B cell (primary cell): ENCODE measurements at regions of chr13 and their contacts with region 1.

Region 1: GRCh38 chr13:36981156-36981743 is 17.9 kb downstream of the ALG5 start:
- DNase-seq: peak; percentile 46
- ATAC-seq: no peak
- H3K4me3 ChIP-seq: no peak overlapping the region
- H3K4me3 Mint-ChIP-seq: no peak overlapping the region
- H3K27ac ChIP-seq: no peak overlapping the region
- H3K27ac Mint-ChIP-seq: no peak overlapping the region
- H3K4me1 ChIP-seq: no peaks in the 10 kb centered on the region
- H3K4me1 Mint-ChIP-seq: peaks cover 2% of the 10 kb centered on the region
- H3K27me3 ChIP-seq: no peaks in the 10 kb centered on the region
- H3K27me3 Mint-ChIP-seq: no peaks in the 10 kb centered on the region
- CTCF ChIP-seq: peak; percentile 73

Region 2: GRCh38 chr13:36282818-36283445 is 698.3 kb before region 1 on chr13:
- CTCF ChIA-PET with region 1: interaction called, 4 read pairs
- POLR2A ChIA-PET with region 1: no interaction called
- intact Hi-C with region 1: loop called (anchors 2 kb)
- DNase-seq: peak; percentile 33
- ATAC-seq: no peak
- H3K4me3 ChIP-seq: no peak overlapping the region
- H3K4me3 Mint-ChIP-seq: no peak overlapping the region
- H3K27ac ChIP-seq: no peak overlapping the region
- H3K27ac Mint-ChIP-seq: no peak overlapping the region
- H3K4me1 ChIP-seq: no peaks in the 10 kb centered on the region
- H3K4me1 Mint-ChIP-seq: no peaks in the 10 kb centered on the region
- H3K27me3 ChIP-seq: no peaks in the 10 kb centered on the region
- H3K27me3 Mint-ChIP-seq: no peaks in the 10 kb centered on the region
- CTCF ChIP-seq: peak; percentile 81

Region 3: GRCh38 chr13:36346222-36347083 is 634.8 kb before region 1 on chr13 and contains the start of gene SPART:
- CTCF ChIA-PET with region 1: interaction called, 5 read pairs
- POLR2A ChIA-PET with region 1: no interaction called
- intact Hi-C with region 1: loop called (anchors 5 kb)
- DNase-seq: peak; percentile 92
- ATAC-seq: peak; percentile 85
- H3K4me3 ChIP-seq: peak within 1 kb of the TSS; percentile 64 to 98 (median 85)
- H3K4me3 Mint-ChIP-seq: peak within 1 kb of the TSS; percentile 95
- H3K27ac ChIP-seq: peak within 1 kb of the TSS; percentile 93 to 96
- H3K27ac Mint-ChIP-seq: peak within 1 kb of the TSS; percentile 96
- H3K4me1 ChIP-seq: peaks cover 10 to 16% of the 10 kb centered on the region in 2 donors
- H3K4me1 Mint-ChIP-seq: peaks cover 24% of the 10 kb centered on the region
- H3K27me3 ChIP-seq: no peaks in the 10 kb centered on the region
- H3K27me3 Mint-ChIP-seq: peaks cover 14% of the 10 kb centered on the region
- CTCF ChIP-seq: peak; percentile 88
- total RNA-seq, gene SPART: 18.6 and 20.8 TPM in 2 replicates

Region 4: GRCh38 chr13:36420437-36420891 is 560.8 kb before region 1 on chr13:
- CTCF ChIA-PET with region 1: interaction called, 47 read pairs
- POLR2A ChIA-PET with region 1: no interaction called
- intact Hi-C with region 1: no loop called
- DNase-seq: peak; percentile 76
- ATAC-seq: peak; percentile 80
- H3K4me3 ChIP-seq: no peak overlapping the region
- H3K4me3 Mint-ChIP-seq: no peak overlapping the region
- H3K27ac ChIP-seq: no peak overlapping the region
- H3K27ac Mint-ChIP-seq: no peak overlapping the region
- H3K4me1 ChIP-seq: peaks cover 0 to 9% of the 10 kb centered on the region in 2 donors
- H3K4me1 Mint-ChIP-seq: peaks cover 6% of the 10 kb centered on the region
- H3K27me3 ChIP-seq: peaks cover 0 to 7% (median 2%) of the 10 kb centered on the region in 4 experiments
- H3K27me3 Mint-ChIP-seq: peaks cover 36% of the 10 kb centered on the region
- CTCF ChIP-seq: peak; percentile 97

Region 5: GRCh38 chr13:36818804-36819738 is 162.2 kb before region 1 on chr13 and contains the start of gene RFXAP:
- CTCF ChIA-PET with region 1: interaction called, 5 read pairs
- POLR2A ChIA-PET with region 1: interaction called, 7 read pairs
- intact Hi-C with region 1: loop called (anchors 2 kb)
- DNase-seq: peak; percentile 95
- ATAC-seq: peak; percentile 93
- H3K4me3 ChIP-seq: peak within 1 kb of the TSS; percentile 54 to 96 (median 69)
- H3K4me3 Mint-ChIP-seq: peak within 1 kb of the TSS; percentile 97
- H3K27ac ChIP-seq: peak within 1 kb of the TSS; percentile 45 to 79
- H3K27ac Mint-ChIP-seq: peak within 1 kb of the TSS; percentile 91
- H3K4me1 ChIP-seq: peaks cover 19 to 22% of the 10 kb centered on the region in 2 donors
- H3K4me1 Mint-ChIP-seq: peaks cover 47% of the 10 kb centered on the region
- H3K27me3 ChIP-seq: peaks cover 0 to 5% (median 2%) of the 10 kb centered on the region in 4 experiments
- H3K27me3 Mint-ChIP-seq: peaks cover 11% of the 10 kb centered on the region
- CTCF ChIP-seq: peak; percentile 21
- total RNA-seq, gene RFXAP: 9.6 and 13.5 TPM in 2 replicates

Region 6: DNA sequence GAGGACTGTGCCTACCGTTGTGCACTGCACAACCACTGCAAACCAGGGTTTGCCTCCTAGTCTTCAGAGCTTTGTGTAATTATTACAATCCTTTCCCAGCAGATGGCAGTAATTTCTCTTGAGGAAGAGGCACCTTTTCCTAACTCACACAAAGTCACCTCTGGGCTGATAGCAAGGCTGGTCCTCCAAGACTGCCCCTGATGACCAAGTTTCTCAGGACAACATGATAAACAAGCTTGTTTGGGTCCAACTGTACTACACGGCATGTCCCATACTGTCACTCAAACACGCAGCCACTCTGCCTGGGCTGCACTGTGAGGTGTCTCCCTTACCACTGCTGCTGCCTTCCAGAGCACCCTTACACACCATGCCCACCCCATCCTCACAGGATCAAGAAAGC is 123.0 kb before region 1 on chr13:
- CTCF ChIA-PET with region 1: interaction called, 15 read pairs
- POLR2A ChIA-PET with region 1: no interaction called
- intact Hi-C with region 1: loop called (anchors 2 kb)
- DNase-seq: peak; percentile 20
- ATAC-seq: no peak
- H3K4me3 ChIP-seq: no peak overlapping the region
- H3K4me3 Mint-ChIP-seq: no peak overlapping the region
- H3K27ac ChIP-seq: no peak overlapping the region
- H3K27ac Mint-ChIP-seq: no peak overlapping the region
- H3K4me1 ChIP-seq: no peaks in the 10 kb centered on the region
- H3K4me1 Mint-ChIP-seq: no peaks in the 10 kb centered on the region
- H3K27me3 ChIP-seq: peaks cover 0 to 5% (median under 1%) of the 10 kb centered on the region in 4 experiments
- H3K27me3 Mint-ChIP-seq: peaks cover 23% of the 10 kb centered on the region
- CTCF ChIP-seq: peak; percentile 44

Region 7: GRCh38 chr13:36915106-36915505 is 66.1 kb before region 1 on chr13:
- CTCF ChIA-PET with region 1: no interaction called
- POLR2A ChIA-PET with region 1: no interaction called
- intact Hi-C with region 1: no loop called
- DNase-seq: no peak
- ATAC-seq: no peak
- H3K4me3 ChIP-seq: no peak overlapping the region
- H3K4me3 Mint-ChIP-seq: no peak overlapping the region
- H3K27ac ChIP-seq: no peak overlapping the region
- H3K27ac Mint-ChIP-seq: no peak overlapping the region
- H3K4me1 ChIP-seq: peaks cover 5 to 6% of the 10 kb centered on the region in 2 donors
- H3K4me1 Mint-ChIP-seq: peaks cover 10% of the 10 kb centered on the region
- H3K27me3 ChIP-seq: peaks cover 0 to 21% (median 12%) of the 10 kb centered on the region in 4 experiments
- H3K27me3 Mint-ChIP-seq: peaks cover 45% of the 10 kb centered on the region
- CTCF ChIP-seq: no peak

Region 8: GRCh38 chr13:36992340-36992739 is 11.1 kb after region 1 on chr13:
- CTCF ChIA-PET with region 1: interaction called, 12 read pairs
- POLR2A ChIA-PET with region 1: no interaction called
- intact Hi-C with region 1: no loop called
- DNase-seq: no peak
- ATAC-seq: no peak
- H3K4me3 ChIP-seq: no peak overlapping the region
- H3K4me3 Mint-ChIP-seq: no peak overlapping the region
- H3K27ac ChIP-seq: no peak overlapping the region
- H3K27ac Mint-ChIP-seq: no peak overlapping the region
- H3K4me1 ChIP-seq: no peaks in the 10 kb centered on the region
- H3K4me1 Mint-ChIP-seq: peaks cover 8% of the 10 kb centered on the region
- H3K27me3 ChIP-seq: no peaks in the 10 kb centered on the region
- H3K27me3 Mint-ChIP-seq: no peaks in the 10 kb centered on the region
- CTCF ChIP-seq: no peak

Region 9: DNA sequence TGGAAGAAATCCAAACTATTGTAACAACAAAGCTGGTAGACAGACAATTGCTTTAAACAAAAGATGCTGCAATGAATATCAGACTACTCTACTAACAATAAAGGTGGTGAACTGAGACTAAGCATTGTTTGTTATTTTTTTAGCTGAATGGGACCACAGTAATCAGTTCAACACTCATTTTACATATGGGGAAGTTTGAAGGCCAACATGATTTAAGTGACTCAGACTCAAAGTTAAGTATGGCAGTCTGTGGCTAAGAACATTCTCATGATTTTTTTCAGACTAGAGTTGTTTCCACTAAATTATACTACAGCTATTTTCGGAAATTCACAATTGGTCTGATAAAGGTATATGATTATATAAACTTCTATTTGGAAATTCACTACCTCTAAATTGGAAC is 29.8 kb after region 1 on chr13:
- CTCF ChIA-PET with region 1: no interaction called
- POLR2A ChIA-PET with region 1: no interaction called
- intact Hi-C with region 1: no loop called
- DNase-seq: no peak
- ATAC-seq: no peak
- H3K4me3 ChIP-seq: no peak overlapping the region
- H3K4me3 Mint-ChIP-seq: no peak overlapping the region
- H3K27ac ChIP-seq: no peak overlapping the region
- H3K27ac Mint-ChIP-seq: no peak overlapping the region
- H3K4me1 ChIP-seq: no peaks in the 10 kb centered on the region
- H3K4me1 Mint-ChIP-seq: no peaks in the 10 kb centered on the region
- H3K27me3 ChIP-seq: no peaks in the 10 kb centered on the region
- H3K27me3 Mint-ChIP-seq: no peaks in the 10 kb centered on the region
- CTCF ChIP-seq: no peak